ENCODE measurements at regions of chr2 and their contacts with region 1.

Region 1: DNA sequence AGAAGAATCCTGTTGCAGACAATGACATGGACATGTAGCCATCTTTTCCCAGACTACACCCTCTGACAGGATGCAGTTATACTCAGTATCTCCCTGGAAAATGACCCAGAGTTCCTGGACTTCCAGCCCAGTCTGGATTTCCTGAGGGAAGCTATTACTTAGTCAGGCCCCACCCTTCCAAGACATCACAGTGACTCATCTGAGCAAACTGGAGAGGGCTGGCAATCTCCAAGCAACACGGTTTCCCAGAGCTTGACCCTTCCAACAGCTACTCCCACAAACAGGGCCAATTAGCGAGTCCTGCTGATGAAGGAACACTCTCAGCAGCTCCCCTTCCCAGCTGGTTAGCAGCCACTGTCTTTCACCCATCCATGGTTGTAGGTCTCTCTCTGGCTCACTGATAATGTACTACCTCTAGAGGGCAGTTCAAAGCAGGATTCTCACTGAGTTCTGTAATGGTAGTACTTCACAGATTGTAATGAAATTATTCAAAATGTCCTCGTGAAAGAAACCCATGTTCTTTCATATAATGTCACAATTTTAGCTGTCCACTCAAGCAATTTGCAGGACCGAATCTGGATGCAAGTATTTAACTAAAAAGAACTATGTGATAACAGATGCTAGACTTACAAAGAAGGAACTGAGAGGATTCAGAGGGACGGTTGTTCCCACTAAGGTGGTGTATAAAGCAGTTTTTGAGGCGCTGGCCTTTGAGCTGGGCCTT is 110.2 kb downstream of the MDH1 start:
- DNase-seq: no peak

Region 2: DNA sequence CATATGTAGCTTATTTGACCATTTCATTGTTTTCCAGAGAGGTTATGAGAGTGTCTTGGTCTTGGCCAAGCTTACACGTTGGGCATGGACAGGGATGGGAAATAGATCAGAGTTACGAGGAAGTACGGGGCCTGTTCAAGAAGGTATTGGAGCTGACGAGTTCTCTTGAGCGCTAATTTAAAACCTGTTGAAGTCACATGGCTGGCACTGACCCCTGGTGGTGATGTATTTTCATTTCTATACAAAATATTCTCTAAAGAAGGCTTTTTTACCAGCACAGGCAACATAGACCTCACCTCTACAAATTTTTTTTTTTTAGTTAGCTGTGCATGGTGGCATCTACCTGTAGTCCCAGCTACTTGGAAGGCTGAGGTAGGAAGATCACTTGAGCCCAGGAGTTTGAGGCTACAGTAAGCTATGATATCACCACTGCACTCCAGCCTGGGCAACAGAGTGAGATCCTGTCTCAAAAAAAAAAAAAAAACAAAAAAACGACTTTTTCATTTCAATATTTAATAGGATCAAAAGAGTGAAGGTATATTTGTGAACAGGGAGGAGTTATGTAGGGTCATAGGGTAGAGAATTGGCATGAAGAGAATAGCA is 162.3 kb after region 1 on chr2:
- intact Hi-C with region 1: loop called (anchors 5 kb)
- DNase-seq: no peak

Region 3: GRCh38 chr2:63888490-63889402 is 189.8 kb after region 1 on chr2:
- intact Hi-C with region 1: loop called (anchors 2 kb)
- DNase-seq: no peak

Measured in cardiac septum (tissue), 1 donor.